ENCODE measurements at regions of chr20 and their contacts with region 1.

Region 1: DNA sequence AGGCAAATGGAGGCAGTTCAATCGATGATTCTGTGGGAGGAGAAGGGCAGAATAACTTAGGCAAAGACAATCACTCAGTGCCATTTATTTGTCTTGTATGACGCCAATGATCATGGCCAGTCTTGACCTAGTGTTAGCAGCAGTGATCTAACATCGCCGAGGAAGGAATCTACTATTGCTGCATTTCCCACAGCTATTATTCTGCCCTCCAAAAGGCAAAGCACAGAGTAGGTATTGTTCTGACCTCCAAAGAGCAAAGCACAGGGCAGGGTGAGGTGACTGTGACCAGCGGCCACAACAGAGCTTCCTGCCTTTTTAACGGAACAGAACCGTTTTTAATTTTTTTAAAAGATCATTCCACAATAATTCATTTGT is 235.9 kb downstream of the CDH4 start:
- DNase-seq: no peak
- H3K4me3 ChIP-seq: no peak overlapping the region
- H3K27ac ChIP-seq: peak overlapping the region in 1 of 2 donors; percentile 12
- H3K4me1 ChIP-seq: no peaks in the 10 kb centered on the region
- H3K27me3 ChIP-seq: no peaks in the 10 kb centered on the region
- CTCF ChIP-seq: no peak
- POLR2A ChIP-seq: no peak

Region 2: GRCh38 chr20:61535956-61536355 is 48.0 kb after region 1 on chr20:
- intact Hi-C with region 1: loop called (anchors 2 kb)
- DNase-seq: no peak
- H3K4me3 ChIP-seq: no peak overlapping the region
- H3K27ac ChIP-seq: no peak overlapping the region
- H3K4me1 ChIP-seq: no peaks in the 10 kb centered on the region
- H3K27me3 ChIP-seq: peaks cover 0 to 8% of the 10 kb centered on the region in 2 donors
- CTCF ChIP-seq: no peak
- POLR2A ChIP-seq: no peak

Measured in breast epithelium (tissue), 4 donors.